ENCODE measurements at regions of chr16 and their contacts with region 1.

Region 1: GRCh38 chr16:89193021-89193575 is 7.2 kb downstream of the SLC22A31 start:
- DNase-seq: peak; percentile 80
- ATAC-seq: peak; percentile 75
- H3K4me3 ChIP-seq: no peak overlapping the region
- H3K27ac ChIP-seq: no peak overlapping the region
- H3K4me1 ChIP-seq: no peaks in the 10 kb centered on the region
- H3K27me3 ChIP-seq: no peaks in the 10 kb centered on the region
- CTCF ChIP-seq: no peak

Region 2: GRCh38 chr16:88706288-88706964 is 486.7 kb before region 1 on chr16 and contains the starts of genes CTU2 and RNF166:
- CTCF ChIA-PET with region 1: no interaction called
- POLR2A ChIA-PET with region 1: no interaction called
- intact Hi-C with region 1: no loop called
- DNase-seq: peak; percentile 88
- ATAC-seq: peak; percentile 79
- H3K4me3 ChIP-seq: peak within 1 kb of the TSS; percentile 97
- H3K27ac ChIP-seq: peak within 1 kb of the TSS; percentile 32; the same call in 1 of the 2 replicates
- H3K4me1 ChIP-seq: peaks cover 6% of the 10 kb centered on the region; the same call in 1 of the 2 replicates
- H3K27me3 ChIP-seq: no peaks in the 10 kb centered on the region
- CTCF ChIP-seq: no peak
- total RNA-seq, gene CTU2: 30.3 and 39.4 TPM in 2 replicates
- total RNA-seq, gene RNF166: 25.2 and 28.8 TPM in 2 replicates

Region 3: GRCh38 chr16:89217388-89218191 is 24.5 kb after region 1 on chr16 and contains the start of gene ZNF778:
- CTCF ChIA-PET with region 1: interaction called, 3 read pairs
- POLR2A ChIA-PET with region 1: interaction called, 15 read pairs
- intact Hi-C with region 1: no loop called
- DNase-seq: peak; percentile 74
- ATAC-seq: peak; percentile 82
- H3K4me3 ChIP-seq: peak within 1 kb of the TSS; percentile 98
- H3K27ac ChIP-seq: peak within 1 kb of the TSS; percentile 86
- H3K4me1 ChIP-seq: 0 out of 2 replicates have a peak, but pooled peaks cover 10% of the 10 kb centered on the region
- H3K27me3 ChIP-seq: no peaks in the 10 kb centered on the region
- CTCF ChIP-seq: no peak
- total RNA-seq, gene ZNF778: 15.3 and 17.3 TPM in 2 replicates